ENCODE measurements at regions of chr12 and their contacts with region 1.

Region 1: GRCh38 chr12:1474041-1474573 is 120.3 kb downstream of the FBXL14 start:
- DNase-seq: peak; percentile 16
- H3K4me3 Mint-ChIP-seq: no peak overlapping the region
- H3K27ac Mint-ChIP-seq: no peak overlapping the region
- H3K4me1 Mint-ChIP-seq: peaks cover 6% of the 10 kb centered on the region
- H3K27me3 Mint-ChIP-seq: no peaks in the 10 kb centered on the region

Region 2: DNA sequence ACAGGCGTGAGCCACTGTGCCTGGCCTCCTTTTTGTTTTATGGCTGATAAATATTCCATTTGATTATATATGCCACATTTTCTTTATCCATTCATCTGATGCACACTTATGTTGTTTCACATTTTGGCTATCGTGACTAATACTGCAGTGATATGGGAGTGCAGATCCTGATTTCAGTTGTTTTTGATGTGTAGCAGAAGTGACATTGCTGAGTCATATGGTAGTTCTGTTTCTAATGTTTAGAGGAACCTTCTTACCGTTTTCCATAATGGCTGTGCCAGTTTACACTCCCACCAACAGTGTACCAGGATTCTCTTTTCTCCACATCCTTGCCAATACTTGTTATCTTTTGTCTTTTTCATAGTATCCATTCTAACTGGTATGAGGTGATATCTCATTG is 247.2 kb before region 1 on chr12:
- intact Hi-C with region 1: loop called (anchors 1 kb)
- DNase-seq: no peak
- H3K4me3 Mint-ChIP-seq: no peak overlapping the region
- H3K27ac Mint-ChIP-seq: no peak overlapping the region
- H3K4me1 Mint-ChIP-seq: peaks cover 14% of the 10 kb centered on the region
- H3K27me3 Mint-ChIP-seq: peaks cover 4% of the 10 kb centered on the region

Region 3: DNA sequence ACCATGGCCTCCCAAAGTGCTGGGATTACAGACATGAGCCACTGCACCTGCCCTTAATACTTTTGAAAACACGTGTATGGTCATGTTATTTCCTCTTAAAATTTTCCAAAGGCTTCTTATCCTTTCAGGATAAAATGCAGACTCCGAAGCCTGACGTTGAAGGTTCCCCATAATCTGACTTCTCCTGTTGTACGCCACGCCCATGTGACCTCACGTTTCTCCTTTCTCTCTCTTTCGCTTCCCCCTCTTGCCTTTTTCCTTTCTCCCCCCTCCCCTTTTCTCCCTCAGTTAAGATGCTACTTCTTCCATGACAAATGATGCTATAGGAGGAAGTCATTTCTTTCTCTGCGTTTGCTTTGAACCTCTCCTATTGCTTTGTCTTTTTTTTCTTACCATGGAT is 145.7 kb before region 1 on chr12:
- intact Hi-C with region 1: loop called (anchors 1 kb)
- DNase-seq: no peak
- H3K4me3 Mint-ChIP-seq: no peak overlapping the region
- H3K27ac Mint-ChIP-seq: no peak overlapping the region
- H3K4me1 Mint-ChIP-seq: peaks cover 10% of the 10 kb centered on the region
- H3K27me3 Mint-ChIP-seq: peaks cover 4% of the 10 kb centered on the region

Region 4: GRCh38 chr12:1443421-1444141 is 30.5 kb before region 1 on chr12:
- intact Hi-C with region 1: no loop called
- DNase-seq: no peak
- H3K4me3 Mint-ChIP-seq: no peak overlapping the region
- H3K27ac Mint-ChIP-seq: no peak overlapping the region
- H3K4me1 Mint-ChIP-seq: no peaks in the 10 kb centered on the region
- H3K27me3 Mint-ChIP-seq: no peaks in the 10 kb centered on the region

Measured in activated T-helper 1 cell treated with anti-CD3 and anti-CD28 coated beads, Interleukin-12 subunit alpha, Interleukin-12 subunit beta, Interleukin-2, Interleukin-4 antibody, amounts not matched to agents 30 ng/mL and 10 ng/mL and 1 ng/mL, durations not matched to agents 14 hours and 24 hours and 36 hours (primary cell).